B cell (primary cell): ENCODE measurements at regions of chr19 and their contacts with region 1.

Region 1: GRCh38 chr19:20423381-20424197 is 142.0 kb downstream of the ZNF737 start:
- DNase-seq: peak; percentile 62
- ATAC-seq: no peak
- H3K4me3 ChIP-seq: peak overlapping the region; percentile 74 to 100 (median 84)
- H3K4me3 Mint-ChIP-seq: peak overlapping the region; percentile 97
- H3K27ac ChIP-seq: peak overlapping the region; percentile 54 to 77
- H3K27ac Mint-ChIP-seq: peak overlapping the region; percentile 98
- H3K4me1 ChIP-seq: peaks cover 0 to 7% of the 10 kb centered on the region in 2 donors
- H3K4me1 Mint-ChIP-seq: peaks cover 11% of the 10 kb centered on the region
- H3K27me3 ChIP-seq: no peaks in the 10 kb centered on the region
- H3K27me3 Mint-ChIP-seq: no peaks in the 10 kb centered on the region
- CTCF ChIP-seq: no peak

Region 2: GRCh38 chr19:20077791-20078463 is 345.7 kb before region 1 on chr19 and contains the start of gene ZNF90:
- CTCF ChIA-PET with region 1: interaction called, 4 read pairs
- POLR2A ChIA-PET with region 1: no interaction called
- intact Hi-C with region 1: loop called (anchors 5 kb)
- DNase-seq: peak; percentile 93
- ATAC-seq: peak; percentile 99
- H3K4me3 ChIP-seq: peak within 1 kb of the TSS; percentile 60 to 78 (median 68)
- H3K4me3 Mint-ChIP-seq: peak within 1 kb of the TSS; percentile 95
- H3K27ac ChIP-seq: peak within 1 kb of the TSS in 1 of 2 donors; percentile 9
- H3K27ac Mint-ChIP-seq: peak within 1 kb of the TSS; percentile 79
- H3K4me1 ChIP-seq: peaks cover 10 to 14% of the 10 kb centered on the region in 2 donors
- H3K4me1 Mint-ChIP-seq: peaks cover 25% of the 10 kb centered on the region
- H3K27me3 ChIP-seq: no peaks in the 10 kb centered on the region
- H3K27me3 Mint-ChIP-seq: no peaks in the 10 kb centered on the region
- CTCF ChIP-seq: no peak
- total RNA-seq, gene ZNF90: 14.6 and 15.8 TPM in 2 replicates

Region 3: GRCh38 chr19:20167020-20167644 is 256.5 kb before region 1 on chr19 and contains the start of gene ZNF486:
- CTCF ChIA-PET with region 1: no interaction called
- POLR2A ChIA-PET with region 1: no interaction called
- intact Hi-C with region 1: loop called (anchors 10 kb)
- DNase-seq: peak; percentile 95
- ATAC-seq: peak; percentile 98
- H3K4me3 ChIP-seq: peak within 1 kb of the TSS; percentile 54 to 99 (median 73)
- H3K4me3 Mint-ChIP-seq: peak within 1 kb of the TSS; percentile 100
- H3K27ac ChIP-seq: peak within 1 kb of the TSS; percentile 65 to 78
- H3K27ac Mint-ChIP-seq: peak within 1 kb of the TSS; percentile 97
- H3K4me1 ChIP-seq: peaks cover 17 to 25% of the 10 kb centered on the region in 2 donors
- H3K4me1 Mint-ChIP-seq: peaks cover 56% of the 10 kb centered on the region
- H3K27me3 ChIP-seq: no peaks in the 10 kb centered on the region
- H3K27me3 Mint-ChIP-seq: no peaks in the 10 kb centered on the region
- CTCF ChIP-seq: no peak
- total RNA-seq, gene ZNF486: 16.6 and 18.3 TPM in 2 replicates

Region 4: DNA sequence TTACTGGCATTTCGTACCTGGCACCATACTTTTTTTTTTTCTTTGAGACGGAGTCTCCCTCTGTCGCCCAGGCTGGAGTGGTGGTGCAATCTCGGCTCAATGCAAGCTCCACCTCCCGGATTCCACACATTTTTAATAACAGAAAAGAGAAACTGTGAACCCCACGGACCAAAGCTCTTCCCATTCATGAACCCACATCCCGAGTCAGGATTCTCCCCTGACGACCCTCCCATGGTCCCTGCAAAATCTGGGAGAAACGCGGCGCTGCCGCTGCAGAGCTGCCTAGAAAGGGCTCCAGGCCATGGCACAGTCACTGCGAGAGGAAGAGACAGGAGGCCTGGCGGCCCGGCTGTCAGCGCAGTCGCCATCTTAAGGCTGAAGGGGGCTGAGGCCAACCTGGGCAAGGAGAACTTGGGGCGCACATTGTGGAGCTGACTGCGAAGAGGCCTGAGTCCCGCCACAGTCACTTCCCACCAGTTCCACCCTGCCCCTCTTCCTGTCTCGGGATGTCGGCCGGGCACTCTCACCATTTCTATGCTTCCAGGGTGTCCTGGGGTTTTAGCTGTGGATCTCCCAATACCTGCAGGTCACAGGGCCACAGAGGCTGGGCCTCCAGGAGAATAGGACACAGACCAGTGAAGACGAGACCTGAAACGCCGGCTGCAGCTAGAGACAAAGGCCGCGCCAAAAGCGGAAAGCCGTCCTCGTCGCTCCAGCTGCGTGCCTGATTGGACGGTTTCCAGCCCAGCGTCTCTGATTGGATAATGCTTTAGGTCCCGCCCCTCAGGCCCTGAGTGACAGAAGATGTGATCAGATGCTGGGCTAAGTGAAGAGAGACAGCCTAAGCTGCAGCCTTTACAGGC is 185.6 kb before region 1 on chr19:
- CTCF ChIA-PET with region 1: no interaction called
- POLR2A ChIA-PET with region 1: no interaction called
- intact Hi-C with region 1: loop called (anchors 5 kb)
- DNase-seq: peak; percentile 91
- ATAC-seq: peak; percentile 85
- H3K4me3 ChIP-seq: peak overlapping the region; percentile 58 to 89 (median 82)
- H3K4me3 Mint-ChIP-seq: peak overlapping the region; percentile 100
- H3K27ac ChIP-seq: peak overlapping the region; percentile 22 to 73
- H3K27ac Mint-ChIP-seq: peak overlapping the region; percentile 87
- H3K4me1 ChIP-seq: peaks cover 3 to 22% of the 10 kb centered on the region in 2 donors
- H3K4me1 Mint-ChIP-seq: peaks cover 29% of the 10 kb centered on the region
- H3K27me3 ChIP-seq: no peaks in the 10 kb centered on the region
- H3K27me3 Mint-ChIP-seq: no peaks in the 10 kb centered on the region
- CTCF ChIP-seq: no peak

Region 5: DNA sequence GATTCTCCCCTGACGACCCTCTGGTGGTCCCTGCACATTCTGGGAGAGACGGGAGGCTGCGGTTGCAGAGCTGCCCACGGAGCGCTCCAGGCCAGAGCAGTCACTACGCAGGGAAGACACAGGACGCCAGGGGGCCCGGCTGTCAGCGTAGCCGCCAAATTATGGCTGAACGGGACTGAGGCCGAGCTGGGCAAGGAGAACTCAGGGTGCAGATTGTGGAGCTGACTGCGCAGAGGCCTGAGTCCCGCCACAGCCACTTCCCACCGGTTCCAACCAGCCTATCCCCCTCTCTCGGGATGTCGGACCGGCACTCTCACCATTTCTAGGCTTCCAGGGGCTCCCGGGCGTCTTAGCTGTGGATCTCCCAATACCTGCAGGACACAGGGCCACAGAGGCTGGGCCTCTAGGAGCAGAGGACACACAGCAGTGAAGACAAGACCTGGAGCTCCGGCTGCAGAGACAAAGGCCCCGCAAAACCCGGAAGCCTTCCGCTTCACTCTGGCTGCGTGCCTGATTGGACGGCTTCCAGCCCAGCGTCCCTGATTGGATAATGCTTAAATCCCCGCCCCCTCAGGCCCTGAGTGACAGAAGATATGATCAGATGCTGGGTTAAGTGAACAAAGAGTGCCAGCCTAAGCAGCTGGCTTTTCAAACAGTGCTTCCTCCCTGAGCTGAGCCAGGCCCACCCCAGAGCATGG is 141.9 kb after region 1 on chr19 and contains the start of gene ZNF737:
- CTCF ChIA-PET with region 1: interaction called, 6 read pairs
- POLR2A ChIA-PET with region 1: interaction called, 4 read pairs
- intact Hi-C with region 1: loop called (anchors 10 kb)
- DNase-seq: peak; percentile 93
- ATAC-seq: peak; percentile 92
- H3K4me3 ChIP-seq: peak within 1 kb of the TSS; percentile 38 to 87 (median 80)
- H3K4me3 Mint-ChIP-seq: peak within 1 kb of the TSS; percentile 98
- H3K27ac ChIP-seq: peak within 1 kb of the TSS; percentile 93 to 96
- H3K27ac Mint-ChIP-seq: peak within 1 kb of the TSS; percentile 99
- H3K4me1 ChIP-seq: peaks cover 6 to 15% of the 10 kb centered on the region in 2 donors
- H3K4me1 Mint-ChIP-seq: peaks cover 32% of the 10 kb centered on the region
- H3K27me3 ChIP-seq: no peaks in the 10 kb centered on the region
- H3K27me3 Mint-ChIP-seq: no peaks in the 10 kb centered on the region
- CTCF ChIP-seq: no peak
- total RNA-seq, gene ZNF737: 45.6 and 50.1 TPM in 2 replicates

Region 6: DNA sequence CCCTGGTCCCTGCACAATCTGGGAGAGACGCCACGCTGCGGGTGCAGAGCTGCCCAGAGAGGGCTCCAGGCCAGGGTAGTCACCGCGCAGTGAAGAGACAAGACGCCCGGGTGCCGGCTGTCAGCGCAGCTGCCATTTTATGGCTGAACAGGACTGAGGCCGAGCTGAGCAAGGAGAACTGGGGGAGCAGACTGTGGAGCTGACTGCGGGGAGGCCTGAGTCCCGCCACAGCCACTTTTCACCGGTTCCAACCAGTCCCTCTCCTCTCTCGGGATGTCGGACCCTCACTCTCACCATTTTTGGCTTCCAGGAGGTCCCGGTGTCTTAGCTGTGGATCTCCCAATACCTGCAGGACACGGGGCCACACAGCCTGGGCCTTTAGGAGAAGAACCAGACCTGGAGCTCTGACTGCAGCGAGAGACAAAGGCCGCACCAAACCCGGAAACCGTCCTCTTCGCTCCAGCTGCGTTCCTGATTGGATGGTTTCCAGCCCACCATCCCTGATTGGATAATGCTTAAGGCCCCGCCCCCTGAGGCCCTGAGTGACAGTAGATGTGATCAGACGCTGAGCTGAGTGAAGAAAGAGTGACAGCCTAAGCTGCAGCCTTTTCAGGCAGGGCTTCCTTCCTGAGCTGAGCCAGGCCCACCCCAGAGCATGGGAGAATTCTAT is 237.7 kb after region 1 on chr19 and contains the start of gene ZNF626:
- CTCF ChIA-PET with region 1: no interaction called
- POLR2A ChIA-PET with region 1: interaction called, 8 read pairs
- intact Hi-C with region 1: loop called (anchors 10 kb)
- DNase-seq: peak; percentile 97
- ATAC-seq: peak; percentile 99
- H3K4me3 ChIP-seq: peak within 1 kb of the TSS; percentile 61 to 85 (median 77)
- H3K4me3 Mint-ChIP-seq: peak within 1 kb of the TSS; percentile 95
- H3K27ac ChIP-seq: peak within 1 kb of the TSS; percentile 85 to 91
- H3K27ac Mint-ChIP-seq: peak within 1 kb of the TSS; percentile 97
- H3K4me1 ChIP-seq: peaks cover 22 to 33% of the 10 kb centered on the region in 2 donors
- H3K4me1 Mint-ChIP-seq: peaks cover 41% of the 10 kb centered on the region
- H3K27me3 ChIP-seq: no peaks in the 10 kb centered on the region
- H3K27me3 Mint-ChIP-seq: no peaks in the 10 kb centered on the region
- CTCF ChIP-seq: no peak
- total RNA-seq, gene ZNF626: 15.2 and 17.6 TPM in 2 replicates

Region 7: DNA sequence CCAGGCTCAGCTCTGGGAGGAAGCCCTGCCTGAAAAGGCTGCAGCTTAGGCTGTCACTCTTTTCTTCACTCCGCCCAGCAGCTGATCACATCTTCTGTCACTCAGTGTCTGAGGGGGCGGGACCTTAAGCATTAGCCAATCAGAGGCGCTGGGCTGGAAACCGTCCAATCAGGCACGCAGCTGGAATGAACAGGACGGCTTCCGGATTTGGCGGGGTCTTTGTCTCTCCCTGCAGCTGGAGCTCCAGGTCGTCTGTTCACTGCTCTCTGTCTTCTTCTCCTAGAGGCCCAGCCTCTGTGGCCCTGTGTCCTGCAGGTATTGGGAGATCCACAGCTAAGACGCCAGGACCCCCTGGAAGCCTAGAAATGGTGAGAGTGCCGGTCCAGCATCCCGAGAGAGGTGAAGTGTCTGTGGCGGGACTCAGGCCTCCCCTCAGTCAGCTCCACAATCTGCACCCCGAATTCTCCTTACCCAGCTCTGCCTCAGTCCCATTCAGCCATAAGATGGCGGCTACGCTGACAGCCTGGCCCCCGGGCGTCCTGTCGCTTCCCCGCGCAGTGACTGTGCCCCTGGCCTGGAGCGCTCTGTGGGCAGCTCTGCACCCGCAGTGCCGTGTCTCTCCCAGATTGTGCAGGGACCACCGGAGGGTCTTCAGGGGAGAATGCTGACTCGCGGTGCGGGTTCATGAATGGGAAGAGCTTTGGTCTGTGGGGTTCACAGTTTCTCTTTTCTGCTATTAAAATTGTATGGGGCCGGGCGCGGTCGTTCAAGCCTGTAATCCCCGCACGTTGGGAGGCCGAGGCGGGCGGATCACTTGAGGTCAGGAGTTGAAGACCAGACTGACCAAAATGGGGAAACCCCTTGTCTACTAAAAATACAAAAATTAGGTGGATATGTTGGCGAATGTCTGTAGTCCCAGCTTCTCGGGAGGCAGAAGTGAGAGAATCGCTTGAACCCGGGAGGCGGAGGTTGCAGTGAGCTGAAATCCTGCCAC is 352.8 kb after region 1 on chr19 and contains the start of gene ZNF66:
- CTCF ChIA-PET with region 1: no interaction called
- POLR2A ChIA-PET with region 1: interaction called, 4 read pairs
- intact Hi-C with region 1: loop called (anchors 1 kb)
- DNase-seq: peak; percentile 95
- ATAC-seq: peak; percentile 98
- H3K4me3 ChIP-seq: peak within 1 kb of the TSS; percentile 74 to 91 (median 80)
- H3K4me3 Mint-ChIP-seq: peak within 1 kb of the TSS; percentile 97
- H3K27ac ChIP-seq: peak within 1 kb of the TSS; percentile 66 to 90
- H3K27ac Mint-ChIP-seq: peak within 1 kb of the TSS; percentile 91
- H3K4me1 ChIP-seq: peaks cover 0 to 5% of the 10 kb centered on the region in 2 donors
- H3K4me1 Mint-ChIP-seq: peaks cover 29% of the 10 kb centered on the region
- H3K27me3 ChIP-seq: no peaks in the 10 kb centered on the region
- H3K27me3 Mint-ChIP-seq: no peaks in the 10 kb centered on the region
- CTCF ChIP-seq: no peak
- total RNA-seq, gene ZNF66: 25.0 and 27.7 TPM in 2 replicates